Activated T-helper 2 cell treated with anti-CD3 and anti-CD28 coated beads, Interferon-gamma antibody, Interleukin-2, Interleukin-4, amounts not matched to agents 10 μg/mL and 5 μg/mL and 100 μg/mL, durations not matched to agents 14 hours and 24 hours and 36 hours (primary cell): ENCODE measurements at regions of chr12 and their contacts with region 1.

Region 1: GRCh38 chr12:49707128-49707811 is at the start of gene FMNL3:
- DNase-seq: peak; percentile 98
- H3K4me3 Mint-ChIP-seq: peak within 1 kb of the TSS; percentile 94
- H3K27ac Mint-ChIP-seq: peak within 1 kb of the TSS; percentile 84
- H3K4me1 Mint-ChIP-seq: peaks cover 43% of the 10 kb centered on the region
- H3K27me3 Mint-ChIP-seq: peaks cover 21% of the 10 kb centered on the region
- total RNA-seq, gene FMNL3: 36.2 and 38.0 TPM in 2 replicates

Region 2: DNA sequence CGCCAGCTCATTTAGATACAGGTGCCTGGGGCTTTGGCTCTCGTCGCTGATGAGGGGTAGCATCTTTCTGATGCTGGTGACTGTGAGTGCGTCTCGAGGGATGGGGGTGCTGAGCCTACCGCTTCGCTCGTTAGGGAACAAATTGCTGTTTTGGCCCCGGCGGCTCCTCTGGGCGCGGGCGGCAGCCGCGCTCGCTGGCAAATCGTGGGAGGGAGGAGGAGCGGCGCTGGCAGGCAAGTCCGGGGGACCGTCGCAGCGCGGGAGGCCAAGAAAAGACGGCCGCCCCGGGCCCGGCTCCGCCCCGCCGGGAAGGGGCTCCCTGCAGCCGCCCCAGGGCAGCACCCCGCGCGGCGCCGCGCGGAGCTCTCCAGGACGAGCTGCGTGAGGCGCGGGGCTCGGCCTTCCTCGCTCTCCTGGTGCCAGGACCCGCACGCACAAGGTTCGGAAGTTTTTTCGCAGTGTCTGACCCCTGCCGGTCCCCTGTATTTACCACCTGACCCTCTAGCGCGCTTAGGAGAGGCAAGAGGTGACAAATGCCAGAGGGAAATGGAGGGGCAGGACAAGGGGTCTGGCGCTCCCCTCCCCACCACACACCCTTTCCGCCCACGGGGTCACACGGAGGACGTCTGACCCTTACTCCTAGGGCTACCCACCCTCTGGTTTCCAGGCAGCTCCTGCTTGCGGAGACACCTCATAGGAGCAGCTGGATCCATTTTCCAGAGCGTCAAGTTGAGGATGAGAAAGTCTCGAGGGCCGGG is 169.3 kb before region 1 on chr12:
- intact Hi-C with region 1: no loop called
- DNase-seq: no peak
- H3K4me3 Mint-ChIP-seq: peak overlapping the region; percentile 76
- H3K27ac Mint-ChIP-seq: no peak overlapping the region
- H3K4me1 Mint-ChIP-seq: peaks cover 4% of the 10 kb centered on the region
- H3K27me3 Mint-ChIP-seq: peaks cover 52% of the 10 kb centered on the region

Region 3: DNA sequence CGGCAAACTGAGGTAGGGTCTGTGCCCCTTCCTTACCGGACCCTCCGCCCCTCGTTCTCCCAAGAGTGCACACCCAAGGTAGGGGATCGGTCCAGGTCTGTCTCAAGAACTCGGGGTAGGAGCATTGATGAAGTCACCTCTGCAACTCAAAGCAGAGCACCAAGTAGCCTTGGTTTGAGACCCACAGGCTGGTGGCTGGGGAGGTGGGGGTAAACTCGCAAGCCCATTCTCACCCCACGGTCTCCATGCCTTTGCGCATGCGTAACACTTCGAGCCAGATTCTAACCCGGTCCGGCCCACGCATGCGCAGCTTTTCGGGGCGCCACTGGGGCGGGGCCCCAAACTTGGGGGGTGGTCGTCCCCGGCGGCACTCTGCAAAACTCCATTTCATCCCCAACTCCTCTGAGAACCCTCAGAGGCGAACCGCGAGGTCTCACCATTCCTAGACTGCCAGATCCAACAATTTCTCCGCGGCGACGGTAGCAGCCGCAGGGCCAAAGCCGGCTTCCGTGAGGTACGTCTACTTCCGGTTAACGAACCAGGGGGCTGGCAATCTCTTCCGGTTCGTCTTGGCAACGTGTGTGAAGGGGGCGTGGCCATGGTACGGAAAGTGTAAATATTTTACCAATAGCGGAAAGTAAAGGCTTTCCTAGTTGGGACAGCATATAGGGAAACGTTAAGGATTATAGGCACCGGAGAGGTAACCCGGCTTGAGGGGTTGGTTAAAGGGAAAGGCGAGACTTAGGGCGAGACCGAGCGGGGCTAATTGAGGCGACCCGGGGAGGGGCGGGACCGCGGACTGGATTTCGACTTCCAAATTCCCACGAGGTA is 139.4 kb before region 1 on chr12 and contains the start of gene MCRS1:
- intact Hi-C with region 1: loop called (anchors 1 kb)
- DNase-seq: peak; percentile 87
- H3K4me3 Mint-ChIP-seq: peak within 1 kb of the TSS; percentile 99
- H3K27ac Mint-ChIP-seq: peak within 1 kb of the TSS; percentile 99
- H3K4me1 Mint-ChIP-seq: peaks cover 42% of the 10 kb centered on the region
- H3K27me3 Mint-ChIP-seq: no peaks in the 10 kb centered on the region
- total RNA-seq, gene MCRS1: 67.9 and 73.0 TPM in 2 replicates

Region 4: GRCh38 chr12:49644620-49644994 is 62.7 kb before region 1 on chr12:
- intact Hi-C with region 1: loop called (anchors 1 kb)
- DNase-seq: peak; percentile 60
- H3K4me3 Mint-ChIP-seq: no peak overlapping the region
- H3K27ac Mint-ChIP-seq: peak overlapping the region; percentile 68
- H3K4me1 Mint-ChIP-seq: peaks cover 10% of the 10 kb centered on the region
- H3K27me3 Mint-ChIP-seq: no peaks in the 10 kb centered on the region

Region 5: DNA sequence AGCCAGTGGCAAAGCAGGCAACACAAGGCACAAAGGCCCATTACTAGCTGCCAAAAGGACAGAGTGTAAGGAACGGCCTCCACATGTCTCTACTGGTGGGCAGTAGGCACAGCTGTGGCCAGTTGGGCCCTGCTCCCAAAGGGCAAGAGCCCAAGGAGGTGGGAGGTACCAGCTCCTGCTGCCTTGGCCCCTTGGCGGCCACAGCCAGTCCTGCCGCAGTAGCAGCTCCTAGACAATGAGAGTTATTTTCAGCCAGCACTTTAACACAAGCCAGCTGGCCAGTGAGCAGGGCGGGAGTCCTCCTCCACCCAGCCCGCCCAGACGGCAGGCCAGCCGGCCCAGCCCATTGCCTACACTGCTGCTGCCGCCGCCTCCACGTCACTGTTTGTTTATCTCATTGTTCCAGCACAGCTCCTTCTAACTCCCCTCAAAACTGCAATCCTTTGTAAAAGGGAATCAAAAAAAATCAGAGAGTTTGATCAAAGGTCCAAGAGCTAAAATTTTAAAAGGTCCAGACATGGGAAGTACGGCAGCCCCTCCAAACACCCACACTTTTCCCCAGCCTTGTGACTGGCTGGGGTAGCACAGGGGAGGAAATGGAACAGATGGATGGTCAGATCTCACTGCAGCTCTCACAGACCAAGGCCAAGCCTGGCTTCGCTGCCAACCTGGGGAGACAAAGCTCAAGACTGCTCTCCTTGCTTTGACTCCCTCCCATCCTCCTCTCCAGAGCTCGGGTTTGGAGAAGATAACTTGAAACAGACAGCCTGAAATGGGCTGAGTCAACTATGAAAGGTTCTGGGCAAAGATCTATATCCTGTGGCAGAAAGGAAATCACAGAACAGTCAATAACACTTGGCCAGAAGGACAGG is 33.6 kb before region 1 on chr12:
- intact Hi-C with region 1: loop called (anchors 1 kb)
- DNase-seq: no peak
- H3K4me3 Mint-ChIP-seq: peak overlapping the region; percentile 31
- H3K27ac Mint-ChIP-seq: peak overlapping the region; percentile 71
- H3K4me1 Mint-ChIP-seq: peaks cover 74% of the 10 kb centered on the region
- H3K27me3 Mint-ChIP-seq: no peaks in the 10 kb centered on the region

Region 6: DNA sequence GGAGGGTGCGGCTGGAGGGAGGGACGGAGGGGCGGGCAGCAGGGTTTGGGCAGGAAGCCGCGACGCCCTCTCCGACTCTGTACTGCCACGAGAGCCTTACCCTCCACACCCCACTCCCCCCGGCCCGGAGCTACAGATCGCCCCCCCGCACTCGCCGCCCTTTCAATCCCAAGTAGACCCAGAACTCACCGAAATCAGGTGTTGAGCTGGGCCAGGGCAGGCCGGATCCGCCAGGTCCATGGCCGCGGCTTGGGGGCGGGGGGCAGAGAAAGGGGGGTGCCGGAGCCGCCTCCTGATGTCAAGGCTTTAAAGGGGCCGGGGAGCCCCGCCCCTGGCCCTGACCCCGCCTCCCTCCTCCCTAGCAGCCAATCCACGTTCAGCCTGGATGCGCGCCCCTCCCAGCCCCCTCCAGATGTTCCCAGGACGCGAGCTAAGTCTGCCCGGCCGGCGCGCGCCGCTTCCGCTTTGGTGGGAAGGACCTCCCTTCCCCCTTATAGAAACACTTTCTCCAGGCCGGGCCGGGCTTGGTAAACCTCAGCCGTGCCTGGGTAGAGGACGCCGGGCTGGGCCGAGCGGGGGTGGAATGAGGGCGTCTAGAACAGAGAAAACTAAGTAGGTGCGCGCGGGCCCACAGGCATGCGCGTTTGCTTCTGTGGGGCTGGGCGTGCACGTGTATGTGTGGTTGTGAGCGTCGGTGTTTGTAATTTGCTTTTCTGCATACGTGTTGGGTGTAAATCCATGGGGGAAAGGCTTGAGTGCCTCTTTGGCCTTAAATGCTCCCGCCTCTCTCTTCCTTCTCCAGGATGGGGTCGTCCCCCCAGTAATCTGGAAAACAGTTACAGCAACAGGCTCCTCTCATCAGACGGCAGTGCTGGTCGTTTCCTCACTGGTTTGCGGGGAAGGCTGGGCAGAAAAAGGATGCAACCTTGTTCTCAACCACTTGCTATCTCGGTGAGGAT is 121.1 kb after region 1 on chr12 and contains the start of gene NCKAP5L:
- intact Hi-C with region 1: loop called (anchors 5 kb)
- DNase-seq: peak; percentile 88
- H3K4me3 Mint-ChIP-seq: peak within 1 kb of the TSS; percentile 93
- H3K27ac Mint-ChIP-seq: peak within 1 kb of the TSS; percentile 83
- H3K4me1 Mint-ChIP-seq: peaks cover 10% of the 10 kb centered on the region
- H3K27me3 Mint-ChIP-seq: peaks cover 12% of the 10 kb centered on the region
- total RNA-seq, gene NCKAP5L: 5.3 and 5.7 TPM in 2 replicates